GM23248 (cell line): ENCODE measurements at regions of chr6 and their contacts with region 1.

Region 1: GRCh38 chr6:46407776-46408530 is 83.3 kb downstream of the RCAN2 start:
- DNase-seq: no peak
- H3K4me3 ChIP-seq: no peak overlapping the region
- H3K27ac ChIP-seq: no peak overlapping the region
- H3K4me1 ChIP-seq: 0 out of 2 replicates have a peak, but pooled peaks cover 6% of the 10 kb centered on the region
- H3K27me3 ChIP-seq: no peaks in the 10 kb centered on the region

Region 2: DNA sequence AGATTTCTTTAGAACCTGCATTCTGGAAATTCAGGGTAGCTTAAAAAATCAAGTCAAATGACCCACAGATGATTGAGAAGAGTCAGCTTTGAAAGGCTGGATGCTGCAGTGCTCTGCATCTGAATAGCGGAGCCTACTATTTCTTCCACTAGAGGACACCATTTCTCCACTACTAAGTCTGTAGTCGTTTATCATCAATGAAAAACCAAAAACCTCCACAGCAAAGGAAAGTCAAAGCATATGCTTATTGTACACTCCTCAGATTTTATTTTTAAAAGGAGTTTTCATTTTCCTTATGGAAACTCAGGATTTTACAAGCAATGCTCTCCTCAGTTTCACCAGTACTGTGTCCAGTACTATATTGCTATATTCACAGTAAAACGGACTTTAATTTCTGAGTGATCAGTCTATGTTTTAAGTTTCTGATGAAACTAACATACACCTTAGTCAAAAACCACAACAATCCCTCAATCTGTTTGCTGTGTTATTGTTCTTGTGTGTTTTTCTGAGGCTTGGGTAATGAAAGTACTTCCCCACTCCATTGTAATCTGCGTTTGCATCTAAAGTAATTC is 186.6 kb before region 1 on chr6:
- in situ Hi-C with region 1: loop called (anchors 5 kb)
- DNase-seq: peak; percentile 72
- H3K4me3 ChIP-seq: no peak overlapping the region
- H3K27ac ChIP-seq: no peak overlapping the region
- H3K4me1 ChIP-seq: no peaks in the 10 kb centered on the region
- H3K27me3 ChIP-seq: no peaks in the 10 kb centered on the region